ENCODE measurements at regions of chr14 and their contacts with region 1.

Region 1: GRCh38 chr14:23320774-23321571 is at the start of gene PABPN1:
- DNase-seq: peak; percentile 96 to 100 (median 99)
- H3K4me3 ChIP-seq: peak within 1 kb of the TSS; percentile 73 to 98
- H3K4me3 Mint-ChIP-seq: peak within 1 kb of the TSS; percentile 91 to 94 (median 92)
- H3K27ac ChIP-seq: peak within 1 kb of the TSS; percentile 89
- H3K27ac Mint-ChIP-seq: peak within 1 kb of the TSS; percentile 90 to 99 (median 98)
- H3K4me1 ChIP-seq: peaks cover 29% of the 10 kb centered on the region
- H3K4me1 Mint-ChIP-seq: peaks cover 18 to 37% (median 27%) of the 10 kb centered on the region in 4 donors
- H3K27me3 ChIP-seq: no peaks in the 10 kb centered on the region
- H3K27me3 Mint-ChIP-seq: peaks cover 0 to 2% of the 10 kb centered on the region in 2 donors
- total RNA-seq, gene PABPN1: 194 to 196 TPM

Region 2: GRCh38 chr14:22598099-22598899 is 722.7 kb before region 1 on chr14 and contains the start of gene ABHD4:
- CTCF ChIA-PET with region 1: no interaction called
- POLR2A ChIA-PET with region 1: no interaction called
- intact Hi-C with region 1: loop called (anchors 10 kb)
- DNase-seq: peak; percentile 51 to 65 (median 54)
- H3K4me3 ChIP-seq: peak within 1 kb of the TSS; percentile 79 to 84
- H3K4me3 Mint-ChIP-seq: peak within 1 kb of the TSS; percentile 92 to 98 (median 97)
- H3K27ac ChIP-seq: peak within 1 kb of the TSS; percentile 74
- H3K27ac Mint-ChIP-seq: peak within 1 kb of the TSS; percentile 77 to 99 (median 94)
- H3K4me1 ChIP-seq: peaks cover 20% of the 10 kb centered on the region
- H3K4me1 Mint-ChIP-seq: peaks cover 16 to 43% (median 32%) of the 10 kb centered on the region in 4 donors
- H3K27me3 ChIP-seq: no peaks in the 10 kb centered on the region
- H3K27me3 Mint-ChIP-seq: no peaks in the 10 kb centered on the region
- total RNA-seq, gene ABHD4: 18.8 to 22.4 TPM

Region 3: DNA sequence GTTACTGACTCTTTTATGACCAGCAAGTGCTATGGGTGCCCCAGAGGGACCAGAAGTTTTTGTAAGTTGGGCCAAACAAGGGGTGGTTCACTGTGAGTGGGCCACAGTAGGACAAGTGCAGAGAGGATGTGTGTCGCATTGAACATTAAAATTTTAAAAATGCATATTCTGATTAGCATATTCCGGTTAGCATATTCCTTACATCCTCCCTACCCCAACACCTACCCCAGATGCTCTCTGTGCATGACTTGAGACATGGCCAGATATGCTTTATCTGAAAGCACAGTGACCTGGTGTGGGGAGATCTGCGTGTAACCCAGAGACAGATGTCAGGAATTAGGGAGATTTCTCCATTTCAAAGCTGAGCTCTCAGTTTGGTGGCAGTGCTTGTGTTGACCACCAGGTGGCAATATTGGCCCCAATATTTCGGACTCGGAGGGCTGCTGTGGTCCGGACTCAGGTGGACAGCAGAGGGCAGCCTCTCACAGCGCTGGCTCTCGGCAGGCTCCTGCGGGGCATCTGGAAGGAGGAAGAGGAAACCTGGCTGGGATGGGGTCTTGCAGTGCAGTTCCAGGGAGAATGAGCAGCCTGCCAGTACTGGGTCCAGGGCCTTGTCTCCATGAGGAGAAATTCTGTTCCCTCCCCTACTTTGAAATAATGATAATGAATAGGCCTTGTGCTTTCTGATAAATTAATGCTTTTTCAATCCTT is 200.3 kb before region 1 on chr14:
- CTCF ChIA-PET with region 1: interaction called, 11 read pairs
- POLR2A ChIA-PET with region 1: interaction called, 19 read pairs
- intact Hi-C with region 1: no loop called
- DNase-seq: peak; percentile 68 to 76 (median 75)
- H3K4me3 ChIP-seq: peak overlapping the region in 1 of 2 donors; percentile 20
- H3K4me3 Mint-ChIP-seq: peak overlapping the region; percentile 40 to 90 (median 80)
- H3K27ac ChIP-seq: peak overlapping the region; percentile 49
- H3K27ac Mint-ChIP-seq: peak overlapping the region; percentile 86 to 95 (median 91)
- H3K4me1 ChIP-seq: peaks cover 57% of the 10 kb centered on the region
- H3K4me1 Mint-ChIP-seq: peaks cover 28 to 55% (median 34%) of the 10 kb centered on the region in 4 donors
- H3K27me3 ChIP-seq: no peaks in the 10 kb centered on the region
- H3K27me3 Mint-ChIP-seq: no peaks in the 10 kb centered on the region

Region 4: DNA sequence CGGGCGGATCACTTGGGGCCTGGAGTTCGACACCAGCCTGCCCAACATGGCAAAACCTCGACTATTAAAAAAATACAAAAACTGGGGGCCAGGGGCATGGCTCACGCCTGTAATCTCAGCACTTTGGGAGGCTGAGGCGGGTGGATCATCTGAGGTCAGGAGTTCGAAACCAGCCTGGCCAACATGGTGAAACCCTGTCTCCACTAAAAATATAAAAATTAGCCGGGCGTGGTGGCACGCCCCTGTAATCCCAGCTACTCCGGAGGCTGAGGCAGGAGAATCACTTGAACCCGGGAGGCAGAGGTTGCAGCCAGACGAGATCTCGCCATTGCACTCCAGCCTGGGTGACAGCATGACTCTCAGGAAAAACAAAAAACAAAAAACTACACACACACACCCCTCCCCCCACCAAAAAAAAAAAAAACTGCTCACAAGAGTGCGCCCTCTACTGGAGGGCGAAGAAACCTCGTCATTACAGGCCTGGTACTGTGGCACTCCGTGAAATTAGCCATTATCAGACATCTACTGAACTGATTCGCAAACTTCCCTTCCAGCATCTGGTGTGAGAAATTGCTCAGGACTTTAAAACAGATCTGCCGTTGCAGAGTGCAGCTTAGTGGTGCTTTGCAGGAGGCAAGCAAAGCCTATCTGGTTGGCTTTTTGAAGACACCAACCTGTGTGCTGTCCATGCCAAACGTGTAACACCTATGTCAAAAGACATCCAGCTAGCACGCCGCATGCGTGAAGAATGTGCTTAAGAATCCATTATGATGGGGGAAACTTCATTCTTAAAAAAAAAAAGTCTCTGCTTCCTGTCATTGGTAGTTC is 26.0 kb before region 1 on chr14:
- CTCF ChIA-PET with region 1: interaction called, 93 read pairs
- POLR2A ChIA-PET with region 1: interaction called, 23 read pairs
- intact Hi-C with region 1: no loop called
- DNase-seq: peak; percentile 48 to 75 (median 74)
- H3K4me3 ChIP-seq: no peak overlapping the region
- H3K4me3 Mint-ChIP-seq: peak overlapping the region; percentile 18 to 77 (median 40)
- H3K27ac ChIP-seq: no peak overlapping the region
- H3K27ac Mint-ChIP-seq: peak overlapping the region; percentile 4 to 97 (median 80)
- H3K4me1 ChIP-seq: peaks cover 20% of the 10 kb centered on the region
- H3K4me1 Mint-ChIP-seq: peaks cover 11 to 20% (median 17%) of the 10 kb centered on the region in 4 donors
- H3K27me3 ChIP-seq: no peaks in the 10 kb centered on the region
- H3K27me3 Mint-ChIP-seq: no peaks in the 10 kb centered on the region

Region 5: DNA sequence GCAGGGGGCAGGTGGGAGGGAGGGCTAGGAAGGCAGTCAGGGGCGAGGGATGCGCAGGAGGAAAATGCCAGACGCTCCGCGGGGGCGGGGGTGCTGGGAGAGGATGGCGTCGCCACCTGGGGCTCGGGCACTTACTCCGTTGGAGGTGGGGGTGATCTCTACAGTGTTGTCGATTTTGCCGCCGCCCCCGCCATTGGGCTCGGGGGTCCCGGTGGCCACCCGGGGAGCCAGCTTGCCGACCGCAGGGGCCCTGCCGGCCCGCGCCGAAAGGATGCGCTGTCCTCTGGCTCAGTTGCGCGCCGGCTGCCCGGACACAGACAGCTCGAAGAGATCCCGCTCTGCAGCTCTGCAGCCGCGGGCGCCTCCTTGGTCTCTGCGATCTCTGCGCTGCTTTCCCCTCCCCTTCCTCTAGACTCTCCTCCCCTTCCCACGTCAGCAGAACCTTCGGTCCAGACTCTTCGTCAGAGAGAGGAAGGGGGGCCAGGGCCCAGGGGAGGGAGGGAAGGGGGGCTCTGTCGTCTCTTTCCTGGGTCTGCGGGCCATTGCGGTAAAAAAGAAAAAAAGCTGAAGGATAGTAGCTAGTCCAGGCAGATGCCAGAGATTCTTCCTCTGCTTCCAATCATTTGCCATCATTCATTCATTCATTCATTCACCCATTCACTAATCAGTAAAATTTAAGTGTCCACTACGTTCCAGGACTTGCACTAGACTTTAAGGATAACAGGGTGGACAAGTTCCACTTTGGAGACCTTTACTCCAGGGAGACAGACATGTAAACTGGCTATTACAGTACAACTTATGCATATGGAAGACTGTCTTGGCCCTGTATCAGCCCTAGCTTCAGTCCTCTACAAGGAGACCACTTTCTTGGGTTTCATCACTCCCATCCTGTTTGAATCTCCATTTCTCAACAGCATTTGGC is 31.8 kb after region 1 on chr14 and contains the start of gene SLC22A17:
- CTCF ChIA-PET with region 1: no interaction called
- POLR2A ChIA-PET with region 1: interaction called, 7 read pairs
- intact Hi-C with region 1: loop called (anchors 1 kb)
- DNase-seq: peak; percentile 48 to 69 (median 50)
- H3K4me3 ChIP-seq: peak within 1 kb of the TSS; percentile 51 to 56
- H3K4me3 Mint-ChIP-seq: peak within 1 kb of the TSS; percentile 80 to 91 (median 86)
- H3K27ac ChIP-seq: no peak within 1 kb of the TSS
- H3K27ac Mint-ChIP-seq: peak within 1 kb of the TSS in 5 of 7 donors; percentile 45 to 86 (median 74)
- H3K4me1 ChIP-seq: peaks cover 7% of the 10 kb centered on the region
- H3K4me1 Mint-ChIP-seq: peaks cover 8 to 24% (median 15%) of the 10 kb centered on the region in 4 donors
- H3K27me3 ChIP-seq: peaks cover 4% of the 10 kb centered on the region
- H3K27me3 Mint-ChIP-seq: peaks cover 34 to 48% of the 10 kb centered on the region in 2 donors
- total RNA-seq, gene SLC22A17: 19.8 to 21.1 TPM

Region 6: GRCh38 chr14:23567192-23568020 is 246.4 kb after region 1 on chr14 and contains the start of gene AP1G2:
- CTCF ChIA-PET with region 1: interaction called, 3 read pairs
- POLR2A ChIA-PET with region 1: interaction called, 4 read pairs
- intact Hi-C with region 1: loop called (anchors 1 kb)
- DNase-seq: peak; percentile 85 to 88 (median 86)
- H3K4me3 ChIP-seq: peak within 1 kb of the TSS; percentile 79 to 94
- H3K4me3 Mint-ChIP-seq: peak within 1 kb of the TSS; percentile 97 to 100 (median 100)
- H3K27ac ChIP-seq: peak within 1 kb of the TSS; percentile 74
- H3K27ac Mint-ChIP-seq: peak within 1 kb of the TSS; percentile 95 to 100 (median 98)
- H3K4me1 ChIP-seq: peaks cover 22% of the 10 kb centered on the region
- H3K4me1 Mint-ChIP-seq: peaks cover 22 to 55% (median 37%) of the 10 kb centered on the region in 4 donors
- H3K27me3 ChIP-seq: no peaks in the 10 kb centered on the region
- H3K27me3 Mint-ChIP-seq: peaks cover 1 to 2% of the 10 kb centered on the region in 2 donors
- total RNA-seq, gene AP1G2: 492 to 498 TPM

Region 7: DNA sequence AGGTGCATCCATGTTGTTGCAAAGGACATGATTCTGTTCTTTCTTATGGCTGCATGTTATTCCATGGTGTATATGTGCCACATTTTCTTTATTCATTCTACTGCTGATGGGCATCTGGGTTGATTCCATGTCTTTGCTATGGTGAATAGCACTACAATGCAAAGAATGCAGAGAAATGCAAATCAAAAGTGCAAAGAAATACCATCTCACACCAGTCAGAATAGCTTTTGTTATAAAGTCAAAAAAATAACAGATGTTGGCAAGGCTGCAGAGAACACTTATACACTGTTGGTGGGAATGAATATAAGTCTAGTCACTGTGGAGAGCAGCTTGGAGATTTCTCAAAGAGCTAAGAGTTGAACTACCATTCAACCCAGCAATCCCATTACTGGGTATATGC is 414.4 kb after region 1 on chr14:
- CTCF ChIA-PET with region 1: no interaction called
- POLR2A ChIA-PET with region 1: no interaction called
- intact Hi-C with region 1: no loop called
- DNase-seq: no peak
- H3K4me3 ChIP-seq: no peak overlapping the region
- H3K4me3 Mint-ChIP-seq: no peak overlapping the region
- H3K27ac ChIP-seq: no peak overlapping the region
- H3K27ac Mint-ChIP-seq: no peak overlapping the region
- H3K4me1 ChIP-seq: no peaks in the 10 kb centered on the region
- H3K4me1 Mint-ChIP-seq: no peaks in the 10 kb centered on the region
- H3K27me3 ChIP-seq: peaks cover 5% of the 10 kb centered on the region
- H3K27me3 Mint-ChIP-seq: peaks cover 9 to 11% of the 10 kb centered on the region in 2 donors

Measured in CD4-positive, alpha-beta memory T cell (primary cell).